GM12878 (cell line): ENCODE measurements at regions of chr2 and their contacts with region 1.

Region 1: DNA sequence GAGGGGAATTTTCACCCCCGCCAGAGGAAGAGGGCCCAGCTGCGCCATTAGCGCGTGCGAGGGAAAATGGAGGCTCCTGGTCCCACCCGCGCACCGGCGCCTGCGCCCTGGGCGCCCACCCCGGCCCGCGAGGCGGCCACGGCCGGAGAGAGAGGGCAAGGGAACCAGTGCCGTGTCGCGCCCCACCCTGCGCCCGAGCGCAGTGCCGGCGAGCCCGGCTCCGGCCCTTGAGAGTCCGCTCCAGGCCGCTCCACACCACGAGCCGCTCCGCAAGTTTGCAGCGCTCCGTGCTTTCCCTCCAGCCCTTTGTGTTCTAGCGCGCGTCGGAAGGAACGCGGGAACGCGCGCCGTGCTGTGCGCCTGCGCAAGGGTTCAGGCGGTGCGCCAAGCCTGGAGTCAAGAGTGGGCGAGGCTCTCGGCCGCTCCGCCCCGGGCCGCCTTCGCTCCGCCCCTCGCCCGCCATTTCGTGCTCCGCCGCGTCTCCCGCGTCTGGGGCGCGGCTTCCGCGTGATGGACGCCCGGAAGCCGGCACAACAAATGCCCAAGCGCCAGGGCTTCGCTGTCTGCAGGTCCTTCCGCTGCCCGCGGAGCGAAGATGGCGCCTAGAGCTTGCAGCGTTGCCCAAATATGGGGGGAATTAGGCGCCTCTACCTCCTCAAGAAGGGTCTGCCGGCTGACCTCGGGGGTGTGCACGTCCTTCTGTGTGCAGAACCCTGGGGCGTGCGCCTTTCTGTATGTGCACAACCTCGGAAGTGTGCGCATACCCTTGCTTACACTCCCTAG is 46.1 kb upstream of the PTMA start:
- DNase-seq: peak; percentile 95
- ATAC-seq: peak; percentile 77
- H3K4me3 ChIP-seq: peak overlapping the region; percentile 56; the same call in 1 of the 2 replicates
- H3K27ac ChIP-seq: peak overlapping the region; percentile 92
- H3K4me1 ChIP-seq: peaks cover 36% of the 10 kb centered on the region
- H3K27me3 ChIP-seq: no peaks in the 10 kb centered on the region
- CTCF ChIP-seq: no peak
- EP300 ChIP-seq: peak; percentile 10 to 53; a peak in 1 of 4 replicates
- POLR2A ChIP-seq: peak; percentile 85
- RAD21 ChIP-seq: 0 out of 2 replicates have a peak, but pooled peaks have one; percentile 7

Region 2: DNA sequence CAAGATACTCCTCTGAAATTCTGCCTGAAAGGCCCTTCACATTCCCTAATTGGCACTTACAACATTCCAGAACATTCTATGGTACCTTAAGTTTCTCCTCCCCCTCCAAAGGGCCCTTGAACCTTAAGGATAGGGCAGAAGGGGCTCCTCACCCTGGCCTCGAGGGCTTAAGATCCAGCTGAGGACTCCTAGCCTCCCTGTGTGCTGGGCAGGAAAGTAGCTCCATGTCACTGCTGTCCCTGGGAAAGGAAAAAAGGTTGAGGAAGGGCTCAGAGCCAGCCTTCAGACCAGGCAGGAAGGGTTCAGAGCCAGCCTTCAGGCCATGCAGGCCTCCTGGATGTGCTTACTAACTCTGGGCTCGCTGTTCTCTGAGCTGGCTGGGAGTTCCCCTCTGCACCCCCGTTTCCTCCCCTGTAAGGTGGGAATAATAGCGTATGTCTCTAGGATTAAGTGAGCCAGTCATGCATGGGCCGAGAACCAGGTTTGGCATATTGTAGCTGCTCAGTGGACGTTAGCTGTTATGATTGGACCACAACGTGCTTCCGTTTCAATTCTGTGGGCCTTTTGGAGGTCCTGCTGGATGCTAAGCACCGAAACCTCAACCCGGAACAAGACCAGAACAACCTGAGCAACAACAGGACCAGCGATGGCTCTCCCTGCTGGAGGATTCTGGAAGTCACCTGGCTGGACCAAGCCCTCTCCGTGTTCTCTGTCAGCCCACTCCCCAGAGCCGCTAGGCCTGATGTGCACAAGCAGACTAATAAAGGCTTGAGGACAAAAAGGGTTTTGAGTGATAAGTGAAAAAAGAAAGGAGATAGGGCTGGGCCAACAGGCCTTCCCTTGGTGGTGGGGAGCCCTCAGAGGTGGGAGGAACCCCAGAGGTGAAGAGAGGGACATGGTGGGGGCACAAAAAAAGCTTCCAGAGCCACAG is 267.7 kb before region 1 on chr2:
- CTCF ChIA-PET with region 1: no interaction called
- POLR2A ChIA-PET with region 1: no interaction called
- RAD21 ChIA-PET with region 1: no interaction called
- SMC1A ChIA-PET with region 1: no interaction called
- in situ Hi-C with region 1: no loop called
- intact Hi-C with region 1: loop called (anchors 10 kb)
- DNase-seq: peak; percentile 87
- ATAC-seq: peak; percentile 66
- H3K4me3 ChIP-seq: peak overlapping the region; percentile 65
- H3K27ac ChIP-seq: peak overlapping the region; percentile 95
- H3K4me1 ChIP-seq: peaks cover 58% of the 10 kb centered on the region
- H3K27me3 ChIP-seq: no peaks in the 10 kb centered on the region
- CTCF ChIP-seq: peak; percentile 52 to 67 (median 61)
- EP300 ChIP-seq: peak in 1 of 2 experiments; percentile 53; a peak in 1 of 4 replicates
- POLR2A ChIP-seq: peak; percentile 76
- RAD21 ChIP-seq: peak; percentile 47

Region 3: GRCh38 chr2:231648587-231649174 is 13.5 kb before region 1 on chr2:
- CTCF ChIA-PET with region 1: interaction called, 11 read pairs
- POLR2A ChIA-PET with region 1: interaction called, 8 read pairs
- RAD21 ChIA-PET with region 1: interaction called, 3 read pairs
- SMC1A ChIA-PET with region 1: interaction called, 15 read pairs
- in situ Hi-C with region 1: no loop called
- intact Hi-C with region 1: no loop called
- DNase-seq: no peak
- ATAC-seq: peak; percentile 100
- H3K4me3 ChIP-seq: no peak overlapping the region
- H3K27ac ChIP-seq: no peak overlapping the region
- H3K4me1 ChIP-seq: no peaks in the 10 kb centered on the region
- H3K27me3 ChIP-seq: no peaks in the 10 kb centered on the region
- CTCF ChIP-seq: peak; percentile 64 to 85 (median 74)
- EP300 ChIP-seq: no peak
- POLR2A ChIP-seq: no peak
- RAD21 ChIP-seq: peak; percentile 81

Region 4: DNA sequence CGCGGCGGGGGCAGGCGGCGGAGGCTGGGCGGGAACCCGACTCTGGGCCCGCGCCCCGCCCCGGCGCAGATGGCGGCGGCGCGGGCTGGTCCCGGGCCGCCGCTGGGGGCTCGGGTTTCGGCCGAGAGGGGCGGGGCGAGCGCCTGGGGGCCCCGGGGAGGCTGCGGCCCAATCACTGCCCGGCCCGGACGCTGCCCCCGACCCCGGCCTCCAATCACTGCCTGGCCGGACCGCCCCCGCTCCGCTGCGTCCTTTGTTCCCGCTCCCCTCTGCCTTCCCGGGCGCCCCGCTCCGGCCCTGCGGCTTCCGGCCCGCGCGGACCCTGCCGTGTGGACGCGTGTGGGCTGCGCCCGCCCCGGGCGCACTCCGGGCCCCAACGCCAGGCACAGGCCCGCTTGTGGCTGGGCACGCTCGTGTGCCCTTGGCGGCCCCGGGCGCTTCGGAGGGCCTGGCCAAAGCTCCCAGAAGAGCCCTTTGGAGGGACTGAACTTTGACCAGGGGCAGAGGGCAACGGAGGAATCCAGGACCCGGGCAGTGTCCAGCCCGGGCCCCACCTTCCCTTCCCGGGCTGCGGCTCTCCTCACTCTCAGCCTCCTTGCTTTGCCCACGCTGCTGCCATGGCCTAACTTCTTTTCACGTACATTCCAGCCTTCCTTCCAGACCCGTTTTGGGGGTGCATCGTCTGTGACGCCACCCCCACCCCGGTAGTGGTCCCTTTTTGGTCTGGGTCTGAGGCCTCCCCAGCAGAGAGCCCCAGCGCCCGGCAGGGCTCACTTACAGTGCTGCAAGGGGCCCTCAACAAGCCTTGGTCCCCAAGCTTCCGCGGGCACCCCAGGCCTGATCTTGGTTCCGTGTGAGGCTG is 19.0 kb after region 1 on chr2:
- CTCF ChIA-PET with region 1: interaction called, 151 read pairs
- POLR2A ChIA-PET with region 1: interaction called, 95 read pairs
- RAD21 ChIA-PET with region 1: interaction called, 34 read pairs
- SMC1A ChIA-PET with region 1: interaction called, 20 read pairs
- in situ Hi-C with region 1: no loop called
- intact Hi-C with region 1: no loop called
- DNase-seq: no peak
- ATAC-seq: peak; percentile 80
- H3K4me3 ChIP-seq: peak overlapping the region; percentile 87
- H3K27ac ChIP-seq: peak overlapping the region; percentile 99
- H3K4me1 ChIP-seq: peaks cover 22% of the 10 kb centered on the region
- H3K27me3 ChIP-seq: no peaks in the 10 kb centered on the region
- CTCF ChIP-seq: no peak
- EP300 ChIP-seq: no peak
- POLR2A ChIP-seq: peak; percentile 84
- RAD21 ChIP-seq: no peak

Region 5: GRCh38 chr2:231706731-231707624 is 44.8 kb after region 1 on chr2:
- CTCF ChIA-PET with region 1: interaction called, 7 read pairs
- POLR2A ChIA-PET with region 1: interaction called, 37 read pairs
- RAD21 ChIA-PET with region 1: interaction called, 3 read pairs
- SMC1A ChIA-PET with region 1: interaction called, 5 read pairs
- in situ Hi-C with region 1: no loop called
- intact Hi-C with region 1: loop called (anchors 1 kb)
- DNase-seq: peak; percentile 95
- ATAC-seq: peak; percentile 61
- H3K4me3 ChIP-seq: peak overlapping the region; percentile 91
- H3K27ac ChIP-seq: peak overlapping the region; percentile 100
- H3K4me1 ChIP-seq: peaks cover 14% of the 10 kb centered on the region
- H3K27me3 ChIP-seq: no peaks in the 10 kb centered on the region
- CTCF ChIP-seq: peak; percentile 91 to 99 (median 99); a peak in 5 of 6 replicates
- EP300 ChIP-seq: no peak
- POLR2A ChIP-seq: no peak
- RAD21 ChIP-seq: no peak

Region 6: DNA sequence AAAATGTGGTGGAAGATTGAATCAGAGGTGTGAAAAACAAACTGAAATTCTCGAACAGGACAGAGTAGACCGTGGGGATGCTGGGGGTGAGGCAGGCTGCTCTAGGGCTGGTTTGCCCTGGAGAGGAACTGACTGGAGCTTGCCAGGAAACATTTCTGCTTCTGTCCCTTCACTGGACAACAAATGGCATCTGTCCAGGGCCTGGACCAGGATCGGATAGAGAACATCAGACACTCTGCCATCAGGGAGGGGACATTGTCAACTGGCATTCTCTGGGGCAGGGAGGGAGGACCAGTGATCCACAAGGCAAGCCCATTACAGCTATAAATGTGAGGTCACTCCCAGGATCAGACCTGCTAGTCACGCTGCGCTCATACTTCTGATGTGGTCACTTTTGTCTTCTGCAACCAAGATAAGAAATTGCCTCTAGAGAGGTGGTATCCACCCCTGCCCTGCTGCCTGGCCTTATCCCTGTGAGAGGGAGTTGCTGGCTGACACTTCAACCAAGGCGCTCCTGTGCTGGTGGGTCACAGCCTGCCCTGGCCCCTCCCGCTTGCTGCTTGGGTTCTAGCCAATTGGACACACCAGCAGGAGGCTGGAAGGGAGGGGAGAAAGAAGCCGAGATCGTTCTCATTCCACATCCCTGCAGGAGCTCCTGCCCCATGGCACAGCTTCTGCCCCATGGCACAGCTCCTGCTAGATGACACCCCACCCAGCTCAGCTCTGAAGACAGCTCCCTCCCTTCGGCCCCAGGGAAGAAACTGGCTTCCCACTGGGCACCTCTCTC is 255.3 kb after region 1 on chr2:
- CTCF ChIA-PET with region 1: no interaction called
- POLR2A ChIA-PET with region 1: no interaction called
- RAD21 ChIA-PET with region 1: no interaction called
- SMC1A ChIA-PET with region 1: no interaction called
- in situ Hi-C with region 1: no loop called
- intact Hi-C with region 1: no loop called
- DNase-seq: no peak
- ATAC-seq: no peak
- H3K4me3 ChIP-seq: no peak overlapping the region
- H3K27ac ChIP-seq: no peak overlapping the region
- H3K4me1 ChIP-seq: no peaks in the 10 kb centered on the region
- H3K27me3 ChIP-seq: no peaks in the 10 kb centered on the region; a peak in 1 of 4 replicates
- CTCF ChIP-seq: no peak
- EP300 ChIP-seq: no peak
- POLR2A ChIP-seq: no peak
- RAD21 ChIP-seq: no peak